Right cardiac atrium (tissue), 5 donors: ENCODE measurements at regions of chr1 and their contacts with region 1.

Region 1: GRCh38 chr1:229558571-229559335 is at the start of gene ABCB10:
- DNase-seq: peak; percentile 97 to 99 (median 98)
- ATAC-seq: peak; percentile 96
- H3K4me3 ChIP-seq: peak within 1 kb of the TSS; percentile 70
- H3K27ac ChIP-seq: peak within 1 kb of the TSS; percentile 69
- H3K4me1 ChIP-seq: peaks cover 7% of the 10 kb centered on the region
- H3K27me3 ChIP-seq: no peaks in the 10 kb centered on the region
- total RNA-seq, gene ABCB10: 9.7 to 15.5 (median 11.5) TPM

Region 2: DNA sequence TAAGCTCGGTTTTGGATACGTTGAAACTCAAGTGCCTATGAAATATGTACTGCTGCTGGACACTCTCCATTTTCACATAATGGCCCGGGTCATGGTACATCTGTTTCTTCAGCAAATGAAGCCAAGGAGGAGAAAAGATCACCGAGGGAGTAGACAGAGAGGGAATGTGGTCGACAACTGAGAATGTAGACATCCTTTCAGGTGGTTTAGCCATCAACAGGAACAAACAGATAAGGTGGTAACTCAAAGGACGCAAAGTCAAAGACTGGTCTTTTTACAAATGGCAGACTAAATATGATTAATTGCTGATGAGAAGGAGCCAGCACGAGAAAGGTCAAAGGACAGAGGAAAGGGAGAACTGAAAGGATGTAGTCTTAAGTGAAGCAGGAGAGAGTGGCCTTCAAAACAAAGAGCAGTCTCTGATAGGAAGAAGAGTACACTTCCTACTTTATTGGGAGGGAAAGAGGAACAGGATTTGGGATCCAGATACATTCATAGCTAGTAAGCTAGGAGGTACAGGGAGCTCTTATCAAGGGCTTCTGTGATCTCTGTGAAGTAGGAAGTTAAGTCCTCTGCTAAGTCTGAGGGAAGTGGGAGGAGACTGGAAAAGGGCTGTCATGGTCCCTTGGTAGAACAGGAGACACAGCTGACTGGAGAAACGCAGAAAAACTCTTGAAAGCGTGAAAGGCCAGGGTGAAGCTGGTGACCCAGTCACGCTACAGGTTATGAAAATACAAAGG is 78.9 kb before region 1 on chr1:
- intact Hi-C with region 1: no loop called
- DNase-seq: no peak
- ATAC-seq: peak in 1 of 2 donors; percentile 86
- H3K4me3 ChIP-seq: no peak overlapping the region
- H3K27ac ChIP-seq: no peak overlapping the region
- H3K4me1 ChIP-seq: peaks cover 1% of the 10 kb centered on the region
- H3K27me3 ChIP-seq: no peaks in the 10 kb centered on the region

Region 3: DNA sequence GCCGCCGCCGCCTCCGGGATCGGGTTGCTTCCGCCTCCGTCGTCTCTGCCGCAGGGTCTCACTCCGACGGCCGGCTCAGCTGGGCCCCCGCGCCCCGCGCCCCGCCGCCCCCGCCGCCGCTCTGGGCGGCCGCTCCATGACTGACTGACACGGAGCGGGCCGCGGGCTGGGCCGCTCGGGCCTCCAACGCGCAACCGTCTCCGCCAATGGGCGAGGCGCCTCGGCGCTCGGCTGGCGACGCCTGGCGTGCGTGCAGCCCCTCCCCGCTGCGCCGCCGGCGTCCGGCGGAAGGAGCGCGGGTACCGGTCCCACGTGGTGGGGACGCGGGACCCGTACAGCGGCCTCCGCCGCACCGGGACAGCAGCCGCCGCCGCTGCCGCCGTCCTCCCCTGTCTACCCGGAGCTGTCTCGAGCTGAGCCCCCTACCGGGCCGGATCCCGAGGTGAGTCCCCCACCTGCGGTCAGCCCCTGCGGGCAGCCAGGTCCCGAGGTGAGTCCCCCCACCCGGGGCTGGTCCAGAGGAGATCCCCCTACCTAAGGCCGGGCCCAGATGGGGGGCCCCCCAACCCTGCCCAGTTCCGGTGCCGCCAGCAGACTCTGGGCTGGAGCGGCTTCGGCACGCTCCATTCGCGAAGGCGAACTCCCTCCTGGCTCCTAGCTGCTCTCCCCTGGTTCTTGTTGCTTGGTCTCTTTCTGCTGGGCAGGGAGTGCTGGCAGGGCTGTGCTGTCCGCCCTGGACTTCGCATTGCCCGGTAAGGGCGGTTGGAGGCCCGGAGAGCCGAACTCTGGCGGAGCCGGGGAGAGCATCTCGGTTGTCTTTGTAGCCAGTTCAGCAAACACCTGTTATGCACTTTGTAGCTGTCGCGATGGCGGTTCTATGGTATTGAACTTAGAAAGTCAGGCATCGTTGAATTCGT is 67.4 kb after region 1 on chr1 and contains the starts of genes TAF5L and URB2:
- intact Hi-C with region 1: loop called (anchors 2 to 10 kb)
- DNase-seq: peak; percentile 90 to 96 (median 94)
- ATAC-seq: peak; percentile 98
- H3K4me3 ChIP-seq: peak within 1 kb of the TSS; percentile 95
- H3K27ac ChIP-seq: peak within 1 kb of the TSS; percentile 65
- H3K4me1 ChIP-seq: peaks cover 8% of the 10 kb centered on the region
- H3K27me3 ChIP-seq: no peaks in the 10 kb centered on the region
- total RNA-seq, gene TAF5L: 10.6 to 19.2 (median 12.1) TPM
- total RNA-seq, gene URB2: 3.5 to 7.5 (median 4.2) TPM